ENCODE measurements at regions of chr10 and their contacts with region 1.

Region 1: DNA sequence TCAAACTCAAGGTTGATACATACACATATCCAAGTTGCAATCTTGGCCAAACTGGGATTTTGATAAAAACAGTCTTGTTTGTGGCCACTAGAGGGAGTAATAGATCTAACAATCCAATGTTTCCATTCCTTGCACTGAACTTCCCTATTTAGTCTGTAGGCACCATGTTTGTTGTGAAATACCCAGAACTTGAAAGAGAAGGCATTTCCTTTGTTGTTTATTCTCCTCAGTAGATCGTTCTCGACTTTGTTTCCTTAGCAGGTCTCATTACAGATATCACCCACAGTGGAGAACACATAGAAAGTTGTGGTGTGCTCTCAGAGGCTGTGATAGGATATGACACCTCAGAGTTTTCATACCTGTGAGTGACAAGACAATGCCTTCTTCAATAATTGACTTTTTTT is 70.3 kb upstream of the MXI1 start:
- DNase-seq: peak in 1 of 2 donors; percentile 87
- H3K4me3 ChIP-seq: no peak overlapping the region
- H3K27ac ChIP-seq: peak overlapping the region in 3 of 5 donors; percentile 69 to 71 (median 71)
- H3K4me1 ChIP-seq: peaks cover 13 to 35% (median 21%) of the 10 kb centered on the region in 4 donors
- H3K27me3 ChIP-seq: no peaks in the 10 kb centered on the region
- CTCF ChIP-seq: peak in 6 of 7 experiments; percentile 64 to 93 (median 84)
- EP300 ChIP-seq: no peak
- POLR2A ChIP-seq: no peak

Region 2: DNA sequence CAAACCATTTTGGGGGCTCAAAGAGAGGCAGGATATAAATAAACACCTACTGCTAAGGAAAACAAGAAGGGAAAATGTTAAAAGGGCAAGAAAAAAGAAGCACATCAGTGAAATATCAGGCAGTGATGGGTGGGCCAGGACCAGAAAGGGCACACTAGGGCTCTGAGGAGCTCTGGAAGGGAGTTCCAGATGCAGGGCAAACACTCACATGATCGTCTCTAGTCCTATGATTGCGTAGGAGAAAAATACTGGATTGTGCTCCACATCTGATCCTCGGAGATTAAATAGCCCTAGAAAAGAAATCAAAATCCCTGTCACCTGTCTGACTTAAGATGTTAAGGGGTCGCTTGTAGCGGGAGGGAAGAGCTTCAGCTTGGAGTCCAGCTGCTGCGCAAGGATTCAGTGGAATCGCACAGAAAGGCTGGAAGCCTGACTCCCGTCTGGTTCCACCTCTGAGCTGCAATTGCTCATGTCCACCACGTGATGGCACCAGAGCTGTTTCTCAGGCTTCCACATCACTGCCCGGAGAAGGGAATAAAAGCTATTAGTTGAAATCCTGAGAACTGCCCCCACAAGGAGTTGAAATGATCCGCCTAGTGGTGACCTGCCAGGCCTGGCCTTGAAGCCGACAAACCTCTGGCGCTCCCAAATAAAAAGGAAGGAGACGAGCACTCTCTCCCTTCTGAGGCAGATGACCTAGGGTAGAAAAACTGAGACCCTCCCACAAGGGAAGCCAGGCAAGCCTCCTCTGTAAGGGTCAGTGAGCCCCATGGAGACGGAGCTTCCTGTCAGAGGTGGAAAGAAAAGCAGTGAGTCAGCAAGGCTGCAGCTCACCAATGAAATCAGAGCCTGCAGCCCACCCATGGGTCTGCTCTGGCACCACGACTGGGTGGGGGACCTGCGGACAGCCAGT is 253.0 kb before region 1 on chr10:
- intact Hi-C with region 1: loop called (anchors 10 kb)
- DNase-seq: peak; percentile 58 to 96
- H3K4me3 ChIP-seq: peak overlapping the region in 1 of 4 donors; percentile 9
- H3K27ac ChIP-seq: peak overlapping the region in 4 of 5 donors; percentile 11 to 72 (median 44)
- H3K4me1 ChIP-seq: peaks cover 0 to 20% (median 9%) of the 10 kb centered on the region in 4 donors
- H3K27me3 ChIP-seq: no peaks in the 10 kb centered on the region
- CTCF ChIP-seq: peak in 6 of 7 experiments; percentile 38 to 96 (median 90)
- EP300 ChIP-seq: no peak
- POLR2A ChIP-seq: no peak

Region 3: DNA sequence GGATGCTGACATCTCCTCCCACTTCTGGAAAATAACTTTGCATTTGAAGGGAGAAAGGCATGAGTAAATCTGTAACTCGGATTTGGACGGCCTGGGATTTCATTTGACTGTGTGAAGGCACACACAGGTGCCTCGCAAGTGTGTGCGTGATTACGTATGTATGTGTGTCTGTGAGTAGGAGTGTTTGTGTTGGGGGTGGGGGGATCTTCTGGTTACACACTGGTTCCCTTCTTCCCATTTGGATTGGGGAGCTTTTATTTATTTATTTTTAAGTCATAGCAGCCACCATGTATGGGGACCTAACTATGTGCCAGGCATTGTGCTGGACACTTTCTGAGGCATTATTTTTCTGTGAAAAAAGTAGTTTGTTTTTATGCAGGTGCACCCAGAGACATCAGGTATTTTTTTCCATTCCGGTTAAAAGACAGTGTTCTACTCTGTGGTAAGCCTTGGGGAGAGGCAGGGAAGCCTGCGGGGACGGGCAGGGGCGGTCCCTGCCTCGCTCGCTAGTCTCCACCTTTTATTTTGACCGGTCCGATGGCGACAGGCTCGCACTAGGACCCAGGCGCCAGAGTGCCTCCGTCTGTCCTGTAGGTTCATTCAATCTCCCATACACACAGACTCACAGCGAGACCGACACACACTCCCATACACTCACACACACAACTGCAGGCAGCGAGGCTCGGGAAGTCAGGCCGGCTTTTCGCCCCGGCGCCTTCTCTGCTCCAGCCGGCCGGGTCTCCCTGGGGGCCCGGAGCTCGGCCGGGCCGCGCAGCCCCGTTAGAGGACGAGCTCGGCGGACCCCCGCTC is 70.1 kb after region 1 on chr10 and contains the start of gene MXI1:
- intact Hi-C with region 1: loop called (anchors 10 kb)
- DNase-seq: peak; percentile 84 to 93
- H3K4me3 ChIP-seq: peak within 1 kb of the TSS; percentile 65 to 73 (median 68)
- H3K27ac ChIP-seq: peak within 1 kb of the TSS; percentile 92 to 97 (median 94)
- H3K4me1 ChIP-seq: peaks cover 4 to 27% (median 15%) of the 10 kb centered on the region in 4 donors
- H3K27me3 ChIP-seq: no peaks in the 10 kb centered on the region
- CTCF ChIP-seq: no peak
- EP300 ChIP-seq: no peak
- POLR2A ChIP-seq: peak in 1 of 4 donors; percentile 25
- total RNA-seq, gene MXI1: 3.5 to 163 (median 48.8) TPM

Region 4: DNA sequence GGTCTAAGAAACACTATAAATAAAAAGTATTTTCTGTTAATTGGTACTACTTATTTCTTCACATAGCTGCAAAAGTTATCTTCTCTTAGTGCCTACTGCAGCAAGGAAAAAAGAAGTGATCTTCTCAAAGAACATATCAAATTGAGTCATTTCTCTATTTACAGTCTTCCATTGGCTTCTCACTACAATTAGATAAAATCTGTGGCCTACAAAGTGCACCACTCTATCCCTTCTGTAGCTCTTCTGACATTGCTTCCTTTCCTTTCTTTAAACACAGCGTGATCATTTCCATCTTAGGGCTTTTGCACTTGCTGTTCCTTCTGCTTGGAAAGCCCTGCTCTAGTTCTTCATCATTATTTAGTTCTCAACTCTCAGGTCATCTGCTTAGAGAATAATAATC is 115.0 kb after region 1 on chr10:
- intact Hi-C with region 1: no loop called
- DNase-seq: no peak
- H3K4me3 ChIP-seq: no peak overlapping the region
- H3K27ac ChIP-seq: no peak overlapping the region
- H3K4me1 ChIP-seq: no peaks in the 10 kb centered on the region
- H3K27me3 ChIP-seq: no peaks in the 10 kb centered on the region
- CTCF ChIP-seq: no peak
- EP300 ChIP-seq: no peak
- POLR2A ChIP-seq: no peak

Region 5: GRCh38 chr10:110279407-110279986 is 142.4 kb after region 1 on chr10:
- intact Hi-C with region 1: loop called (anchors 5 kb)
- DNase-seq: peak; percentile 60 to 89
- H3K4me3 ChIP-seq: no peak overlapping the region
- H3K27ac ChIP-seq: peak overlapping the region in 2 of 5 donors; percentile 16 to 21
- H3K4me1 ChIP-seq: peaks cover 0 to 27% (median 7%) of the 10 kb centered on the region in 4 donors
- H3K27me3 ChIP-seq: no peaks in the 10 kb centered on the region
- CTCF ChIP-seq: peak in 5 of 7 experiments; percentile 50 to 83 (median 75)
- EP300 ChIP-seq: no peak
- POLR2A ChIP-seq: no peak

Measured in stomach (tissue), 19 donors.